Activated CD4-positive, alpha-beta T cell treated with anti-CD3 and anti-CD28 coated beads for 36 hours (primary cell): ENCODE measurements at regions of chr22 and their contacts with region 1.

Region 1: DNA sequence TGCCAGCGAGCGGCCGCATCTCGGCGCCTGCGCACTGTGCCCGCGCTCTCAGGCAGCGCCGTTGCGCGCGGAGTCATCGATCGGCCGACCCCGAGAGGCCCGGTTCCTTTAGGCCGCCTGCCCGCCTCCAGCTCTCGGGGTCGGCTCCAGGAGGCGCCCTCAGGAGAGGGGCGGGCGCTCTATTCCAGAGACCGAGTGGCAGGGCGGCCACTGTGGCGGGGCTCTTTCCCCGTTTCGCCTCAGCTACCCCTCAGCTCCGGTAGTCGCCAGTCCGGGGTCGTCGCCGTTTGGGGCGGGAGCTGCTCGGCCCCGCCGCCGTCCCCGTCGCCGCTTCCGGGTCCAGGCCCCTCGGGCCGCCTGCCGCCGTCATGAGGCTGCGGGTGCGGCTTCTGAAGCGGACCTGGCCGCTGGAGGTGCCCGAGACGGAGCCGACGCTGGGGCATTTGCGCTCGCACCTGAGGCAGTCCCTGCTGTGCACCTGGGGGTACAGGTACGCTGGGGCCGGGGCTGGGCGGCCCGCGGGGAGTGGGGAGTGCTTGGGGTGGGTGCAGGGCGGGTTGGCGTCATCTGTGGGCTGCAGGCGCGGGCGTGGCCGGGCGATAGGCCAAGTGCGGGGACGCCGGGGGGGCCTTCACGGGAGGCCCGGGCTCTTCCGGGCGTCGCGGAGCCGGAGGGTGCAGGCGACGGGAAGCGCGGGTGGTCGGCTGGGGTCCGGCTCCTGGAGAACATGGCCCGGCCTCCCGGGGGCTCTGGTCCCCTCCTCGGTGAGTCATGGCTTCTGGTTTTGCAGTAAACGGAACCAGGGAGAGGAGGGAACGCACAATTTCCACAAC is at the start of gene FBXO7:
- DNase-seq: peak; percentile 93
- ATAC-seq: peak; percentile 83
- H3K4me3 Mint-ChIP-seq: peak within 1 kb of the TSS; percentile 90
- H3K27ac Mint-ChIP-seq: peak within 1 kb of the TSS; percentile 98
- H3K4me1 Mint-ChIP-seq: peaks cover 21% of the 10 kb centered on the region
- H3K27me3 Mint-ChIP-seq: no peaks in the 10 kb centered on the region
- total RNA-seq, gene FBXO7: 81.3 to 85.6 TPM

Region 2: GRCh38 chr22:31917227-31917921 is 557.5 kb before region 1 on chr22:
- CTCF ChIA-PET with region 1: no interaction called
- POLR2A ChIA-PET with region 1: no interaction called
- intact Hi-C with region 1: no loop called
- DNase-seq: peak; percentile 31
- ATAC-seq: peak; percentile 76
- H3K4me3 Mint-ChIP-seq: no peak overlapping the region
- H3K27ac Mint-ChIP-seq: no peak overlapping the region
- H3K4me1 Mint-ChIP-seq: peaks cover 7% of the 10 kb centered on the region
- H3K27me3 Mint-ChIP-seq: no peaks in the 10 kb centered on the region

Region 3: DNA sequence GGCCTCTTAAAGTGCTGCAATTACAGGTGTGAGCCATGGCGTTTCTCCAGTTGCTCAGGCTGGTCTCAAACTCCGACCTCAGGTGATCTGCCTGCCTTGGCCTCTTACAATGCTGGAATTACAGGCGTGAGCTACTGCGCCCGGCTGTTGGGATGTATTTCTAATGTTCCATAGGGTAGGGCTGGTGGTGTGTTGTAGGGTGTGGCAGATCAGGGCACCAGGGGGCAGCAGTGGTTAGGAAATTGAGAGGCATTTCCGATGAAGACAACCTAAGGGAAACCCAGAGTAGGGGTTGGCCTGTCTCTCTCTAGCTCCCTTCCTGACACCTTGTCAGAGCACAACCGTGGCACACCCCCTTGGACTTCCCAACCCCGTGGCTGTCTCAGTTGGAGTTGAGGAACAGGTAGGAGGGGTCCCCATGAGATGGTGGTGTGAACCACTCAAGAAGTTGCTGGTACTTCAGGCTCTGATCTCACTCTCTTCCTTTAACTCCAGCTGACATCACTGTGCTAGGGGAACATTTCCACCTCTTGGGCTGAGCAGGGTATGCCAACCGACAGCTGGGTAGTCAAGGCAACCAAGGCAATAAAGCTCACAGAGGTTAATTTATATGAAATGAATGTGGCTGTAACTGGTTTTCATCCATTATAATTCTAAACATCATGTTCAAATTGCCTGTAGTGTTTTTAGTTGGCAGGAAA is 497.6 kb before region 1 on chr22:
- CTCF ChIA-PET with region 1: interaction called, 3 read pairs
- POLR2A ChIA-PET with region 1: no interaction called
- intact Hi-C with region 1: loop called (anchors 1 kb)
- DNase-seq: peak; percentile 92
- ATAC-seq: peak; percentile 98
- H3K4me3 Mint-ChIP-seq: no peak overlapping the region
- H3K27ac Mint-ChIP-seq: no peak overlapping the region
- H3K4me1 Mint-ChIP-seq: peaks cover 5% of the 10 kb centered on the region
- H3K27me3 Mint-ChIP-seq: peaks cover 2% of the 10 kb centered on the region

Region 4: DNA sequence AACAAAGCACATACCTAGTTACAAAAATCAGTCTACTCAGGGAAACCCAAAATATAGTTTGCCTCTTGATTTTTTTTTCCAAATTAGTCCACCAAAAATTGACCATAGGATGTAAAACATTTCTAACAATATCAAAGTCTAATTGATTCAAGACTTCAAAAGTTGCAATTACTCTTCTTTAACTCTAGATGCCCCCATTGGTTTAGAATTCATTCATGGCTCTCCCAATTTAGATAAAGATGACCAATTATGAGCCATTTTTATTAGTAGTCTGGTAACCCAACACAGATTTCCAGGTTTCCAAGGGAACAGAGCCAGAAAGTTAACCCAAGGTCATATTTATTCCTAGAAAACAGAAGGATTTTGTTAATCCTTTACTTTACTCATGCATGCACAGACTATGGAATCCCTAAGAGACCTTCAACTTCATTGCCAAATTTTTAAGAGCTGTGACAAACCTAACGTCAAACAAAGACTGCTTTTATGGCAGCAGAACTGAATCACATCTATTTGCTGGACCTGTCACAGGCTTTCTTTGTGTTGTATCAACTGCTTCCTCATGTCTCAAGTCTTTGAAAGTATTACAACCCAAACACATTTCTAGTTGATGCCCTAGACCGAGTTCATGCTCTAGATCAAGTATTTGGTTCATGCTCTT is 371.1 kb before region 1 on chr22:
- CTCF ChIA-PET with region 1: no interaction called
- POLR2A ChIA-PET with region 1: no interaction called
- intact Hi-C with region 1: loop called (anchors 1 to 2 kb)
- DNase-seq: no peak
- ATAC-seq: no peak
- H3K4me3 Mint-ChIP-seq: no peak overlapping the region
- H3K27ac Mint-ChIP-seq: no peak overlapping the region
- H3K4me1 Mint-ChIP-seq: no peaks in the 10 kb centered on the region
- H3K27me3 Mint-ChIP-seq: peaks cover 16% of the 10 kb centered on the region

Region 5: GRCh38 chr22:32265882-32266767 is 208.7 kb before region 1 on chr22:
- CTCF ChIA-PET with region 1: interaction called, 3 read pairs
- POLR2A ChIA-PET with region 1: no interaction called
- intact Hi-C with region 1: loop called (anchors 1 to 5 kb)
- DNase-seq: peak; percentile 87
- ATAC-seq: peak; percentile 92
- H3K4me3 Mint-ChIP-seq: no peak overlapping the region
- H3K27ac Mint-ChIP-seq: no peak overlapping the region
- H3K4me1 Mint-ChIP-seq: peaks cover 8% of the 10 kb centered on the region
- H3K27me3 Mint-ChIP-seq: peaks cover 7% of the 10 kb centered on the region

Region 6: DNA sequence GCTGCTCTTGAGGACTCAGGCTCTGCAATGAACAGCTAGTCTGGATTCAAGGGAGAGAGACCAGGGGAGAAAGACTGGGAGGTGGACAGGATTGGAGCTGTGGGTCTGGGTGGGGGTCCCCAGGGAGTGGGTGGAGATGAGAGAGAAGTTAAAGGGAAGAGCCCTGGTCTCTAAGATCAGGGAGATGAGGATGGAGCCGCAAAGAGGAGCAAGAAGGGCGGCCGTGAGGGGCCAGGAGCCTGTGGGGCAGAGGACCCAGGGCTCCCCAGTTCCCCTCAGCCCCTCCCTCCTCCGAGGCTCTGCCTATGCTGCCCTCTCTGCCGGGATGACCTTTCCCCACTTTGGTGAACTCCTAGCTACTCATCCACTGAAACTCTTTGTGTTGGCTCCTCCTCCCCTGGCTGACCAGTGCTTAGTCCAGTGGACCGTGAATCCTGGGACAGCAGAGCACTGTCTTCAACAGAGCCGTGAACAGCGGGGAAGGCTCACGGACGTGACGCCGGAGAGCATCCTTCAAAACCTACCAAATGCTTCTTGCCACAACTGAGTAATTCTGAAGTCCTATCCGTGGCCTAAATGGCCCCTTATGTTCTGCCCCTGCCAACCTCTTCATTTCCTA is 133.6 kb before region 1 on chr22:
- CTCF ChIA-PET with region 1: no interaction called
- POLR2A ChIA-PET with region 1: no interaction called
- intact Hi-C with region 1: no loop called
- DNase-seq: no peak
- ATAC-seq: no peak
- H3K4me3 Mint-ChIP-seq: no peak overlapping the region
- H3K27ac Mint-ChIP-seq: no peak overlapping the region
- H3K4me1 Mint-ChIP-seq: peaks cover 6% of the 10 kb centered on the region
- H3K27me3 Mint-ChIP-seq: peaks cover 32% of the 10 kb centered on the region

Region 7: DNA sequence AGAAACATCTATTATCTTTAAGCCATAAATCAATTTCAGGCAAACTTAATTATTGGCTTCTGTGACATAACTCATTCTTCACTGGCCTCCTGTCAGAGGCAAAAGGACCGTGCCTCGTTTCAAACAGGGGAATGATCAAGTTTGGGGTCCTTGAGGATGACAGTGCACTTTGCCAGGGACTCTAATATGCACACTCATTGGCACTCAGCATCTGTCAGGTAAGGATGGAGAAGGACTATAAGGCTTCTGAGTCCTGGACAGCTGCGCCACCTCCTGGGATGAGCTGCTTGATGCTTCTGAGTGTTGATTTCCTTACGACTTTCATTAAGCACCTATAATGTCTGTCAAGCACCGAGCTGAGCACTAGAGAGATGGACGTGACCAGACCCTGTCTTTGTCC is 30.8 kb before region 1 on chr22:
- CTCF ChIA-PET with region 1: no interaction called
- POLR2A ChIA-PET with region 1: no interaction called
- intact Hi-C with region 1: no loop called
- DNase-seq: peak; percentile 42
- ATAC-seq: no peak
- H3K4me3 Mint-ChIP-seq: no peak overlapping the region
- H3K27ac Mint-ChIP-seq: no peak overlapping the region
- H3K4me1 Mint-ChIP-seq: no peaks in the 10 kb centered on the region
- H3K27me3 Mint-ChIP-seq: peaks cover 3% of the 10 kb centered on the region